ENCODE measurements at regions of chr7 and their contacts with region 1.

Region 1: GRCh38 chr7:146844405-146844804 is 727.8 kb downstream of the CNTNAP2 start:
- DNase-seq: no peak
- ATAC-seq: no peak
- H3K4me3 ChIP-seq: no peak overlapping the region
- H3K4me3 Mint-ChIP-seq: no peak overlapping the region
- H3K27ac ChIP-seq: no peak overlapping the region
- H3K27ac Mint-ChIP-seq: no peak overlapping the region
- H3K4me1 ChIP-seq: no peaks in the 10 kb centered on the region
- H3K4me1 Mint-ChIP-seq: no peaks in the 10 kb centered on the region
- H3K27me3 ChIP-seq: no peaks in the 10 kb centered on the region
- H3K27me3 Mint-ChIP-seq: no peaks in the 10 kb centered on the region
- CTCF ChIP-seq: no peak

Region 2: GRCh38 chr7:146781352-146782116 is 62.9 kb before region 1 on chr7:
- intact Hi-C with region 1: loop called (anchors 10 kb)
- DNase-seq: no peak
- ATAC-seq: peak in 1 of 3 donors; percentile 62
- H3K4me3 ChIP-seq: no peak overlapping the region
- H3K4me3 Mint-ChIP-seq: no peak overlapping the region
- H3K27ac ChIP-seq: no peak overlapping the region
- H3K27ac Mint-ChIP-seq: no peak overlapping the region
- H3K4me1 ChIP-seq: no peaks in the 10 kb centered on the region
- H3K4me1 Mint-ChIP-seq: no peaks in the 10 kb centered on the region
- H3K27me3 ChIP-seq: no peaks in the 10 kb centered on the region
- H3K27me3 Mint-ChIP-seq: no peaks in the 10 kb centered on the region
- CTCF ChIP-seq: no peak

Region 3: DNA sequence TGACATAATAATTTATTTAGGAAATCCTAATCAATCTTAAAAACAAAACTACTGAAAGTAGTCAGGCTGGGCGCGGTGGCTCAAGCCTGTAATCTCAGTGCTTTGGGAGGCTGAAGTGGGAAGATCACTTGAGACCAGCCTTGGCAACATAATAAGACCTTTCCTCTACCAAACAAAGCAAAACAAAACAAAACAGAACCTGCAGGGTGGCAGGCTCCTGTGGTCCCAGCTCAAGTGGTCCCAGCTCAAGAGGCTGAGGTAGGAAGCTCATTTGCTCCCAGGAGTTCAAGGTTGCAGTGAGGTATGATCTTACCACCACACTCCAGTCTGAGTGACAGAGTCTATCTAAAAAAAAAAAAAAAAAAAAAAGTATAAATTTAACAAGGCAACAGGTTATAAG is 20.2 kb after region 1 on chr7:
- intact Hi-C with region 1: no loop called
- DNase-seq: no peak
- ATAC-seq: no peak
- H3K4me3 ChIP-seq: no peak overlapping the region
- H3K4me3 Mint-ChIP-seq: no peak overlapping the region
- H3K27ac ChIP-seq: no peak overlapping the region
- H3K27ac Mint-ChIP-seq: no peak overlapping the region
- H3K4me1 ChIP-seq: no peaks in the 10 kb centered on the region
- H3K4me1 Mint-ChIP-seq: no peaks in the 10 kb centered on the region
- H3K27me3 ChIP-seq: no peaks in the 10 kb centered on the region
- H3K27me3 Mint-ChIP-seq: no peaks in the 10 kb centered on the region
- CTCF ChIP-seq: no peak

Region 4: DNA sequence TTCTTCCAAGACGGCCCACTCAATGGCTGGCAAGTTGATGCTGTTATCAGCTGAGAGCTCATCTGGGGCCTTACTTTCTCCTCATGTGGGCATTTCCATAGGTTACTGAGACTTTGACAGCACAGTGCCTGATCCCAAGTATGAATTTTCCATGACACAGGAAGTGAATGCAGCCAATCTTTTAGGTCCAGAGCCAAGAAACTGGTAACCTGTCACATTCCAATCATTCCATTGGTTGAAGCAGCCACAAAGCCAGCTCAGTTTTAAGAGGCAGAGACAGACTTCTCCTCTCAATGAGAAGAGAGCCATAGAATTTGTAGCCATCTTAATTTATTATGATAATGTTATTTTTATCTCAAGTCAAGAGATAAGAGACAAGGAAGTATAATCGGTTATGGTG is 47.7 kb after region 1 on chr7:
- intact Hi-C with region 1: no loop called
- DNase-seq: no peak
- ATAC-seq: no peak
- H3K4me3 ChIP-seq: no peak overlapping the region
- H3K4me3 Mint-ChIP-seq: no peak overlapping the region
- H3K27ac ChIP-seq: no peak overlapping the region
- H3K27ac Mint-ChIP-seq: no peak overlapping the region
- H3K4me1 ChIP-seq: no peaks in the 10 kb centered on the region
- H3K4me1 Mint-ChIP-seq: no peaks in the 10 kb centered on the region
- H3K27me3 ChIP-seq: no peaks in the 10 kb centered on the region
- H3K27me3 Mint-ChIP-seq: no peaks in the 10 kb centered on the region
- CTCF ChIP-seq: no peak

Measured in natural killer cell (primary cell).